Mammary epithelial cell (primary cell): ENCODE measurements at regions of chr5 and their contacts with region 1.

Region 1: GRCh38 chr5:74035521-74035981 is 409.6 kb downstream of the ARHGEF28 start:
- DNase-seq: peak; percentile 84
- H3K4me3 ChIP-seq: peak overlapping the region in 1 of 3 experiments; percentile 9
- H3K27ac ChIP-seq: peak overlapping the region; percentile 90
- H3K4me1 ChIP-seq: peaks cover 55% of the 10 kb centered on the region
- H3K27me3 ChIP-seq: no peaks in the 10 kb centered on the region
- CTCF ChIP-seq: peak; percentile 58 to 61

Region 2: DNA sequence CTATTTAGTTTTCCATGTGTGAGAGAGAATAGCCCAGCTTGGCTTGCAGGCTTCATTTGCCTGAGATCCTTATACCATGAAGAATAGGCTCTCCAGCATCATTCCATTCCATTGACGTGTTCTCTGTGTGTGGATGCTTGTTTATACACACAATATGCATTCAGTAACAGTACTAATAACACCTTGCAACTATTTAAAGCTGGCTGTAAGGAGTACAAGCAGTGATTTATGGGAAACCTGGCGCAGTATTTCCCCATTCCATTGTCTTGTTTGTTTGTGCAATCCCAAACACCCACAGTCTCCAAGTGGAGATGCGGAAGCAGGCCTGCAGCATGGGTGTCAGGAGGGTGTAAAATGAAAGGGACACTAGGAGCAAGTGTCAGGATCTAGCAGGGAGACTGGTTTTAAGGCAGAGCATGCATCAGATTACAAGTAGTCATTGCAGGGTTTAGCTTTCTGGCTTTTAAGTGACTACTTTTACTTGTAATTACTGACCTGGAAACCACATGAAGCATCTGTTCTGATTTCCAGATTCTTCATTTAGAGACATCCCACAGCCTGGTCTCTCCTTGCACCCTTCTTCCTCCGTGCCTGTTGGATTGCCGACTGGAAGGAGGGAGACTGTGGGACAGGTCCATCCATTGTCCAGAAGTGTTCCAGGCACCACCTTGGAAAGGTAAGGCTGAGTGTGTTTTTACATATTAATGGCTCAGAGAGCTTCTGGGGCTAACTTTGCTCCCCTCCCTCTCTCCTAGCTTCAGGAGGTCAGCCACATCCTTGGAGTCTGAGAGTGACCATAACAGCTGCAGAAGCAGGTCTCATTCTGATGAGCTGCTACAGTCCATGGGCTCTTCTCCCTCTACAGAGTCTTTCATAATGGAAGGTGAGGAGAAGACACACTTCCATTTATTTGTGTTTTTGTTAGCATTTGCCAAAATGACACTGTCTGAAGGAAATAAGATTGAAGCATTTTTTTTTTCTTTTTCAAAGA is 167.9 kb before region 1 on chr5:
- CTCF ChIA-PET with region 1: no interaction called
- dilution Hi-C with region 1: no loop called
- in situ Hi-C with region 1: no loop called
- intact Hi-C with region 1: no loop called
- DNase-seq: no peak
- H3K4me3 ChIP-seq: no peak overlapping the region
- H3K27ac ChIP-seq: no peak overlapping the region
- H3K4me1 ChIP-seq: peaks cover 5% of the 10 kb centered on the region
- H3K27me3 ChIP-seq: no peaks in the 10 kb centered on the region
- CTCF ChIP-seq: no peak

Region 3: DNA sequence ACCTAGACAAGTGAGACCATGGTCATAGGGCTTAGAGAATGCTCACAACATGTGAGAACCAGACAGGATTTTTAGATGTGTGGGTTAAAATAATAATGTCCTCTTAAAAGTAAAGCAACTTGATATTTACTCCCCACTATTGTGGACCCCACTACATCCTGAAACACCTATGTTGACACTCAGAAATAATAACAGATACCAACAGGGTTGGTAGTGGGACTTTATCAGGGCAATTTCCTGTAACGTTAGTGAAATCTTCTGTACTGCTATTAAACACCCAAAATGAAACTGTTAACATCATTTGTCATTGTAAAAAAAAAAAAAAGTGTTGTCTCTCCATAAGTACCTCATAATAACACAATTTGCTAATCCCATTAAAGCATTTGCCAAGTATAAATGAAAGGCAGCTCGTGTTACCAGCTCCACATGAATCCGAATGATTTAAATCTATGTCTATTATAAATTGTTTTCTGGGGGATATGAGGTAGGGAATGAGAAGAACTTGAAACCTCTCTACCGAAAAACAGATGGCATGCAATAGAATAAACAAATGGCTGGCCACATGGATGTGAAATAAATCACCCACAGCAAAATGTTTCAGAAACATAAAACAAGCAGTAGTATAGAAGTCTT is 123.7 kb before region 1 on chr5:
- CTCF ChIA-PET with region 1: no interaction called
- dilution Hi-C with region 1: no loop called
- in situ Hi-C with region 1: no loop called
- intact Hi-C with region 1: no loop called
- DNase-seq: no peak
- H3K4me3 ChIP-seq: no peak overlapping the region
- H3K27ac ChIP-seq: no peak overlapping the region
- H3K4me1 ChIP-seq: no peaks in the 10 kb centered on the region
- H3K27me3 ChIP-seq: no peaks in the 10 kb centered on the region
- CTCF ChIP-seq: no peak

Region 4: GRCh38 chr5:73938280-73938937 is 97.1 kb before region 1 on chr5:
- CTCF ChIA-PET with region 1: no interaction called
- dilution Hi-C with region 1: no loop called
- in situ Hi-C with region 1: no loop called
- intact Hi-C with region 1: loop called (anchors 2 kb)
- DNase-seq: peak; percentile 89
- H3K4me3 ChIP-seq: peak overlapping the region in 2 of 3 experiments; percentile 2 to 6
- H3K27ac ChIP-seq: peak overlapping the region; percentile 90
- H3K4me1 ChIP-seq: peaks cover 42% of the 10 kb centered on the region
- H3K27me3 ChIP-seq: no peaks in the 10 kb centered on the region
- CTCF ChIP-seq: no peak

Region 5: DNA sequence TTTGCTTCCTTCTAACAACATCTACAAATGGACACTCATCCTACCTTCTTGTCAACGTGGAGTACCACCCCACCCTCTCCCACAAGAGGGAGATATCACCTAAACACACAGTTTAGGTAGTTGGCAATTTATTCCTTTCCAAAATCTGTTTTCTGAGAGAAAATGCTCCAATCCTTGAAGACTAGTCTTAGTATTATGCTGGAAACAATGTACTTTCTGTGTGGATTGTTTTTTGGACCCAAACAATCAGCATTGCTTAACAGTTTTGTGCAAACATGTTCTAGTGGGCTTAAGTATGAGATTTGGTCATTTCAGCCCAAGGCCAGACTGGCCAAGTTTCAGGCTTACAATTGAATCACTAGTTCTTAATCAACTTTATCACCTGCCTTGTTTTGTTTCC is 50.4 kb before region 1 on chr5:
- CTCF ChIA-PET with region 1: no interaction called
- dilution Hi-C with region 1: no loop called
- in situ Hi-C with region 1: no loop called
- intact Hi-C with region 1: loop called (anchors 2 kb)
- DNase-seq: peak; percentile 83
- H3K4me3 ChIP-seq: no peak overlapping the region
- H3K27ac ChIP-seq: peak overlapping the region; percentile 38
- H3K4me1 ChIP-seq: peaks cover 30% of the 10 kb centered on the region
- H3K27me3 ChIP-seq: no peaks in the 10 kb centered on the region
- CTCF ChIP-seq: peak; percentile 54 to 56

Region 6: GRCh38 chr5:74240786-74241750 is 205.5 kb after region 1 on chr5:
- CTCF ChIA-PET with region 1: no interaction called
- dilution Hi-C with region 1: no loop called
- in situ Hi-C with region 1: no loop called
- intact Hi-C with region 1: loop called (anchors 10 kb)
- DNase-seq: peak; percentile 100
- H3K4me3 ChIP-seq: peak overlapping the region in 2 of 3 experiments; percentile 3 to 11
- H3K27ac ChIP-seq: peak overlapping the region; percentile 96
- H3K4me1 ChIP-seq: peaks cover 39% of the 10 kb centered on the region
- H3K27me3 ChIP-seq: no peaks in the 10 kb centered on the region
- CTCF ChIP-seq: no peak

Region 7: GRCh38 chr5:74326571-74327338 is 291.2 kb after region 1 on chr5:
- CTCF ChIA-PET with region 1: no interaction called
- dilution Hi-C with region 1: no loop called
- in situ Hi-C with region 1: loop called in 1 of 2 experiments (anchors 10 kb)
- intact Hi-C with region 1: no loop called
- DNase-seq: peak; percentile 97
- H3K4me3 ChIP-seq: no peak overlapping the region
- H3K27ac ChIP-seq: peak overlapping the region; percentile 38
- H3K4me1 ChIP-seq: peaks cover 25% of the 10 kb centered on the region
- H3K27me3 ChIP-seq: no peaks in the 10 kb centered on the region
- CTCF ChIP-seq: no peak

Region 8: GRCh38 chr5:74386571-74387334 is 351.2 kb after region 1 on chr5:
- CTCF ChIA-PET with region 1: no interaction called
- dilution Hi-C with region 1: no loop called
- in situ Hi-C with region 1: no loop called
- intact Hi-C with region 1: loop called (anchors 2 kb)
- DNase-seq: peak; percentile 93
- H3K4me3 ChIP-seq: no peak overlapping the region
- H3K27ac ChIP-seq: peak overlapping the region; percentile 64
- H3K4me1 ChIP-seq: peaks cover 63% of the 10 kb centered on the region
- H3K27me3 ChIP-seq: no peaks in the 10 kb centered on the region
- CTCF ChIP-seq: no peak